Transverse colon (tissue), 4 donors: ENCODE measurements at regions of chr2 and their contacts with region 1.

Region 1: DNA sequence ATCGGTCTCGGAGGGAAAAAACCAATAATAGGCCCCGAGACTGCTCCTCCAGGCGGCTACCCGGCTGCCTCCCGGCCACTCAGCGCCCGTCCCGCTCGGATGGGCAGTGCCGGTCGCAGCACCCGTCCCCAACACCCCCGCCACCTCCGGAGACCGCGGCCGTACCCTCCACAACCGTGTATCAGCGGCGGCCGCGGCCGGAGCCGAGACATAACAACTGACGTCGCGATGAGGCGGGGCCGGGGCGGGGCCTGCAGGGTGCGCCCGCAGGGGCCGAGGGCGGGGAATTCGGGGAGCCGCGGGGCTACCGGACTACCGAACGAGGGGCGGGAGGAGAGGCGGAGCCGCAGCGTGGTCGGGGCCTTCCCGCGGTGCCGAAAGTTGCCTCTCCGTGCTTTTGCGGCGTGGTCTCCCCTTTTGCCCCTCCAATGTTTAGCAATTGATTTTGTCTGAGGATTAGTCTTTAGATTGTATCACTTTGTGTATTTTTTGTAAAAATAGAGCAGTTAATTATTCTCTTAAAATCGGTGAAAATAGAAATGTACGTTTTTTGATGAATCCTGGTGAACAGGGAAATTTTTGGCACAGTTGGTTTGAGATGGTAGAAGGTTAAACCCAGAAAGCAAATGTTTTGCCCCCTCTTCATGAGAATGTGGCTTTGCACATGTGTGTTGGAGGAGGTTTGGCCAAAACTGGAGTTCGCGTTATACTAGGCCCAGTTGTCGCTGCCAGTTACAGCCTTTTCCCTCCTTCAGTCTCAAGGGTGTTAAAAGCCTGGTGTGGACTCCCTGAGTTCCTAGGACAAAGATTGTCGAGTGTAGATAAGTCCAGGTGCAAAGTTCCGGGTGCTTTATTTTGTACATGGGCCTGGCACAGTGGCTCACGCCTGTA is at the start of gene RNF103:
- DNase-seq: peak; percentile 98
- H3K4me3 ChIP-seq: peak within 1 kb of the TSS; percentile 64 to 98 (median 90)
- H3K27ac ChIP-seq: peak within 1 kb of the TSS; percentile 96 to 100 (median 100)
- H3K4me1 ChIP-seq: peaks cover 4 to 48% (median 27%) of the 10 kb centered on the region in 4 donors
- H3K27me3 ChIP-seq: no peaks in the 10 kb centered on the region
- CTCF ChIP-seq: peak in 1 of 5 experiments; percentile 18
- EP300 ChIP-seq: no peak
- POLR2A ChIP-seq: peak; percentile 99
- total RNA-seq, gene RNF103: 47.0 to 114 (median 103) TPM

Region 2: DNA sequence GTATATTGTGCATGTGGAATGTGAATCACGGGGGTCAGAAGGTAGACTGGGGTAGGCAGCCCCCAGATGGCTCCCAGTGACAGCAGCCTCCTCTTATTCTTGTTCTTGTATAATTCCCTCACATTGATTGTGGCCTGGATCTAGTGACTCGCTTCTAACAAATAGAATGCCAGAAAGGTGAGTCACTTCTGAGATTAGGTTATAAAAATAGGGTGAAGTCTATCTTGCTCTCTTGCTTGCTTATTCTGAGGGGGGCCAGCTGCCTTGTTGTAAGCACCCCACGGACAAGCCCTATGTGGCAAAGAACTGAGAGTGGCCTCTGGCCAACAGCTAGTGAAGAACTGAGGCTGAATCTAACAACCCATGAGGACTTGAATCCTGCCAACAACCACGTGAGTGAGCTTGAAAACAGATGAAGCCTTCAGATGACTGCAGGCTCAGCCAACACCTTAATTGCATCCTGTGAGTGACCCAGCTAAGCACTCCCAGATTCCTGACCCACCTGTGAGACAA is 80.6 kb after region 1 on chr2:
- in situ Hi-C with region 1: loop called in 1 of 4 experiments (anchors 10 kb)
- intact Hi-C with region 1: no loop called
- DNase-seq: peak; percentile 75
- H3K4me3 ChIP-seq: peak overlapping the region in 1 of 4 donors; percentile 29
- H3K27ac ChIP-seq: peak overlapping the region; percentile 75 to 86 (median 82)
- H3K4me1 ChIP-seq: peaks cover 7 to 27% (median 20%) of the 10 kb centered on the region in 4 donors
- H3K27me3 ChIP-seq: no peaks in the 10 kb centered on the region
- CTCF ChIP-seq: no peak
- EP300 ChIP-seq: no peak
- POLR2A ChIP-seq: peak; percentile 49